GM13976 (cell line): ENCODE measurements at regions of chr3 and their contacts with region 1.

Region 1: GRCh38 chr3:123335007-123335670 is 113.8 kb downstream of the ADCY5 start:
- DNase-seq: no peak
- CTCF ChIP-seq: no peak

Region 2: DNA sequence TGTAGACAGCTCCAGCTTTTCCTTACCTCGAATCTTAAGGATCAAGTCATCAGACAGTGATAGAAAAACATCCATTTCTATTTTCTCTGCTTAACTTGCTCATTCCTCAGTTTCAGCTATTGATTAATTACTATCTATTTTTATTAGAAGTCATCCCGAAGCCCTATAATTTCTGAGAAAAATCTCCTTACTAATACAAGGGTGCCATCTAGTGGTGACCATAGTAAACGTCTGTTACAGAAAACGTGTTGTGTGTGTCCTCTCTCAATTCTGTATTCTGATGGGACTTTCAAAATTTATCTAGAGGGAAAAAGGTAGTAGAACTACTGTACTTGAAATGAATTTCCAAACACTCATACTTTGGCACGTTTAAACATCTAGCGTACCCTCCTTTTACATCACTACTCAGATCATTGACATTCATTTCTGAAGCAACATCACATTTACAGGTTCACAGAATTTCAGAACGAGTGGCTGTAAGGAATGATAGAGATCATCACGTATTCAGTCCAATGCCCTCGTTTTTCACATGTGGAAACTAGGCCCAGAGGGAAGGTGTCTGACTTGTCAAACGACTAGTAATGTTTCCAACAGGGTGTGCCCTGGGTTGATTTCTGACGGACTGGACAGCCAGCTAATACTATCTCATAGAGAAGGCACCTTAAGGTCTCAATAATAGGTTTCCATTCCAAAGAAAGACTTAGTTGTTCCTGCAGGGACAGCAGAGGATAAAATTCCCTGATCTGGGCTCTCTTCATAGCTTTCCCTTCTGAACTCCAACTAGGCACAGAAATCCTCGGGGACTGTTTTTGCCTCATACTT is 224.1 kb after region 1 on chr3:
- in situ Hi-C with region 1: loop called (anchors 10 kb)
- DNase-seq: peak; percentile 56
- CTCF ChIP-seq: peak; percentile 46

Region 3: DNA sequence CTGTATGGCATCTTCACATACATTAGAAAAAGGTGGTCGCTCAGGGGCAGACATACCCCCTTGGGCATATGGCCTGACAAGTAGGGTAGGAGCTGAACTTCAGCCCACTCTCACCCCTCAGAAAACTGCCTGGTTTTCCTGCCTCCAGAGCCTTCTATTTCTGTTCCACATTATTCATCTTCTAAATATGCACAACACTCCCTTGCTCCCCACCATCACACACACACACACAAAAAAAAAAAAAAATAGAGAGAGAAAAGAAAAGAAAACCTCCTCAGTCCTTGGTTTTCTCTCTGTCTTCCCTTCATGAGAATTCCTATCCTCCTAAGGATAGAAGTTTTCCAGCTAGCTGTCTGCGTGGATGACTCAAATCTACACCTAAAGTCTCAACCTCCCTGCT is 662.4 kb after region 1 on chr3:
- in situ Hi-C with region 1: no loop called
- DNase-seq: no peak
- CTCF ChIP-seq: no peak